ENCODE measurements at regions of chr6 and their contacts with region 1.

Region 1: GRCh38 chr6:168956884-168957730 is 296.5 kb downstream of the THBS2 start:
- DNase-seq: peak; percentile 75
- H3K4me3 Mint-ChIP-seq: no peak overlapping the region
- H3K27ac Mint-ChIP-seq: no peak overlapping the region
- H3K4me1 Mint-ChIP-seq: peaks cover 11% of the 10 kb centered on the region
- H3K27me3 Mint-ChIP-seq: no peaks in the 10 kb centered on the region
- CTCF ChIP-seq: peak; percentile 91

Region 2: GRCh38 chr6:168683621-168684020 is 273.5 kb before region 1 on chr6:
- CTCF ChIA-PET with region 1: no interaction called
- POLR2A ChIA-PET with region 1: no interaction called
- intact Hi-C with region 1: no loop called
- DNase-seq: no peak
- H3K4me3 Mint-ChIP-seq: no peak overlapping the region
- H3K27ac Mint-ChIP-seq: no peak overlapping the region
- H3K4me1 Mint-ChIP-seq: peaks cover 3% of the 10 kb centered on the region
- H3K27me3 Mint-ChIP-seq: peaks cover 51% of the 10 kb centered on the region
- CTCF ChIP-seq: no peak

Region 3: GRCh38 chr6:168895102-168895812 is 61.9 kb before region 1 on chr6:
- CTCF ChIA-PET with region 1: interaction called, 7 read pairs
- POLR2A ChIA-PET with region 1: no interaction called
- intact Hi-C with region 1: loop called (anchors 2 kb)
- DNase-seq: peak; percentile 75
- H3K4me3 Mint-ChIP-seq: peak overlapping the region; percentile 35
- H3K27ac Mint-ChIP-seq: no peak overlapping the region
- H3K4me1 Mint-ChIP-seq: no peaks in the 10 kb centered on the region
- H3K27me3 Mint-ChIP-seq: peaks cover 35% of the 10 kb centered on the region
- CTCF ChIP-seq: peak; percentile 93

Region 4: GRCh38 chr6:169099411-169100202 is 142.5 kb after region 1 on chr6:
- CTCF ChIA-PET with region 1: interaction called, 3 read pairs
- POLR2A ChIA-PET with region 1: no interaction called
- intact Hi-C with region 1: loop called (anchors 5 kb)
- DNase-seq: peak; percentile 56
- H3K4me3 Mint-ChIP-seq: no peak overlapping the region
- H3K27ac Mint-ChIP-seq: no peak overlapping the region
- H3K4me1 Mint-ChIP-seq: peaks cover 14% of the 10 kb centered on the region
- H3K27me3 Mint-ChIP-seq: no peaks in the 10 kb centered on the region
- CTCF ChIP-seq: peak; percentile 36

Region 5: GRCh38 chr6:169520104-169520503 is 563.0 kb after region 1 on chr6:
- CTCF ChIA-PET with region 1: interaction called, 10 read pairs
- POLR2A ChIA-PET with region 1: no interaction called
- intact Hi-C with region 1: no loop called
- DNase-seq: no peak
- H3K4me3 Mint-ChIP-seq: no peak overlapping the region
- H3K27ac Mint-ChIP-seq: no peak overlapping the region
- H3K4me1 Mint-ChIP-seq: no peaks in the 10 kb centered on the region
- H3K27me3 Mint-ChIP-seq: no peaks in the 10 kb centered on the region
- CTCF ChIP-seq: no peak

Region 6: GRCh38 chr6:169751242-169752073 is 794.4 kb after region 1 on chr6 and contains the starts of genes DYNLT2 and ERMARD:
- CTCF ChIA-PET with region 1: no interaction called
- POLR2A ChIA-PET with region 1: interaction called, 3 read pairs
- intact Hi-C with region 1: loop called (anchors 1 kb)
- DNase-seq: peak; percentile 92
- H3K4me3 Mint-ChIP-seq: peak within 1 kb of the TSS; percentile 100
- H3K27ac Mint-ChIP-seq: peak within 1 kb of the TSS; percentile 100
- H3K4me1 Mint-ChIP-seq: peaks cover 17% of the 10 kb centered on the region
- H3K27me3 Mint-ChIP-seq: no peaks in the 10 kb centered on the region
- CTCF ChIP-seq: no peak
- total RNA-seq, gene DYNLT2: 0.79 and 1.3 TPM in 2 replicates
- total RNA-seq, gene ERMARD: 42.8 and 51.7 TPM in 2 replicates

Region 7: DNA sequence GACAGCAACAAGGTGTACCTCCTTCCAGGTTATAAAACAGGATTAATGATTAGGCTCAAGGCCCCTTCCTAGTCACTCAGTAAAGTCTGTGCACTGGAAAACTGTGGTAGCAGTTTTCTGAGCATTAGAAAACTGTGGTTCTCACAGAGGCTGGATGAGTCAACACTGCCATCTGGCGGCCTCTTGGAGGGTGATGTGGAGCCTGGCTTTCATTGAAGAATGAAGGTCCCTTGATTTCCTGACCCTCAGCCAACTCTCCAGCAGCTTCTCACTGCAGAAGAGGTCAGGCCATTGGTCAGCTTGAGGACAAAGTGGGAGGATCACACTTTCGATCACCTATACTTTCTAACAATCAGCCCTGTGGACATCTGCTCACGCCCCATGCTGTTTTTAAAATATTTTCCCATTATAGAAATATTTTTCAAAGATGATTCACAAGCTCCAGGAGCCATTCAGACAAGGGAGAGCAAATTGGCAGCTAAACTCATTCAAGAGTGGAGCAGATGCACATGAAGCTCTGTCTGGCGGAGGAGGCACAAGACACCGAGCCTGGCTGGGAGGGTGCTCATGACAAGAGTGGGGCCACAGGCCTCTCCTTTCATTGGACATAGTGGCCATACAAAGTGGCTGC is 1572.8 kb after region 1 on chr6:
- CTCF ChIA-PET with region 1: interaction called, 4 read pairs
- POLR2A ChIA-PET with region 1: no interaction called
- intact Hi-C with region 1: loop called (anchors 2 kb)
- DNase-seq: peak; percentile 84
- H3K4me3 Mint-ChIP-seq: no peak overlapping the region
- H3K27ac Mint-ChIP-seq: no peak overlapping the region
- H3K4me1 Mint-ChIP-seq: no peaks in the 10 kb centered on the region
- H3K27me3 Mint-ChIP-seq: no peaks in the 10 kb centered on the region
- CTCF ChIP-seq: peak; percentile 77

Measured in MCF 10A (cell line).